Transverse colon (tissue), 4 donors: ENCODE measurements at regions of chr4 and their contacts with region 1.

Region 1: DNA sequence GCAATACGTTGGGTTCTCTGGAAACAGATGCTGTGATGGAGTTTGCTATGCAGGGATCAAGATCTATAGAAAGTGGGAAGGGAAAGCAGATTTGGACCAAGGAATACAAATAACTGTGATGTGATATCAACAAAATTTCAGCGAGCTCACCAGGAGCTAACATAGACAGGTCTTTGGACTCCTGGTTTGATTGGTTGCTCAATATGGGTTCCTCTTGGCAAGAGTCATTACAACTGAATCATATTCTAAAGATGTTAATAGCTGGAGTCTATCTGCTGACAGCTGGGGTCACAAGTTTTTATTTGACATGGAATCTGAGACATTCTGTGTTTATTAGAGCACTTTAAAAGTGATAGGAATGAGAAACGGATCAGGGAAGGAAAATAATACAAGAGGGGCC is 637.6 kb upstream of the GNPDA2 start:
- DNase-seq: no peak
- H3K4me3 ChIP-seq: no peak overlapping the region
- H3K27ac ChIP-seq: no peak overlapping the region
- H3K4me1 ChIP-seq: no peaks in the 10 kb centered on the region
- H3K27me3 ChIP-seq: no peaks in the 10 kb centered on the region
- CTCF ChIP-seq: no peak
- EP300 ChIP-seq: no peak
- POLR2A ChIP-seq: no peak

Region 2: DNA sequence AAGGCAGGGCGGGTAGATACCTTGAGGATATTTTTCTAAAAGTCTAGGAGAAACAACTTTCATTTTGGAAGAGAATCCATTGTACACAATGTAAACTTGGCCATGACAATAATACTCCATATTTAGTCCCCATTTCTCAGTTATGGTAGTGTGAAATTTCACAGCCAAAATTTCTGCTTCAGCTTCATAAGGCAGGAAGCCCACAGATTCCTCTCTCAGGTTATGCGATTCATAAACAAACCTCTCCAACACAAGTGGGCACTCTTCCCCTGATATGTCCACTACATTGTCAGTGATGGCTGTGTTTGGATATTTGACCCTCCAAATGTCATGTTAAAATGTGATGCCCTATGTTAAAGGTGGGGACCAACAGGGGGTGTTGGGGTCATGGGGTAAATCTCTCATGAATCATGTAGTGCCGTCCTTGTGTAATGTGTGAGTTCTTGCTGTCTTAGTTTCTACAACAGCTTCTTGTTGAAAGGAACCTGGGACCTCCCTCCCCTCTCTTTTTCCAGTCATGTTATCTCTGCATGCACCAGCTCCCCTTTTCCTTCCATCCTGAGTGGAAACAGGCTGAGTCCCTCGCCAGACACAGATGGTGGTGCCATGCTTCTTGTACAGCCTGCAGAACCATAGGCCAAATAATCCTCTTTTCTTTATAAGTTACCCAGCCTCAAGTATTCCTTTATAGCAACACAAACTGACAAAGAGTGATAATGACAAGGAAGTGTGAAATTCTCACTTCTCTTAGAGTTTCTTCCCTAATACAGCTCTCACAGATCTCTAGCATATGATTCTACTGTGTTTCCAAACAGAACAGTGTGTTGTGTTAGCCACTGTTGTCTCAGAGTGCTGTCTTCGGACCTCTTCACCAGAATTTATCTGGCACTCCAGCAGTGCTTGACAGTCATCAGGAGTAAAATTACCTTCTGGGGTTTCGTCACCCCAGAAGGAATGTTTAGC is 39.2 kb before region 1 on chr4:
- in situ Hi-C with region 1: no loop called
- intact Hi-C with region 1: loop called (anchors 5 kb)
- DNase-seq: no peak
- H3K4me3 ChIP-seq: no peak overlapping the region
- H3K27ac ChIP-seq: no peak overlapping the region
- H3K4me1 ChIP-seq: no peaks in the 10 kb centered on the region
- H3K27me3 ChIP-seq: no peaks in the 10 kb centered on the region
- CTCF ChIP-seq: no peak
- EP300 ChIP-seq: no peak
- POLR2A ChIP-seq: no peak